GM12878 (cell line): ENCODE measurements at regions of chr14 and their contacts with region 1.

Region 1: GRCh38 chr14:55270832-55271565 is at the start of gene FBXO34:
- DNase-seq: peak; percentile 87
- ATAC-seq: peak; percentile 93
- H3K4me3 ChIP-seq: peak within 1 kb of the TSS; percentile 93
- H3K27ac ChIP-seq: peak within 1 kb of the TSS; percentile 88
- H3K4me1 ChIP-seq: peaks cover 26% of the 10 kb centered on the region
- H3K27me3 ChIP-seq: no peaks in the 10 kb centered on the region
- CTCF ChIP-seq: peak; percentile 99 to 100 (median 99); a peak in 5 of 6 replicates
- EP300 ChIP-seq: peak; percentile 59 to 82; a peak in 3 of 4 replicates
- POLR2A ChIP-seq: peak; percentile 86
- RAD21 ChIP-seq: peak; percentile 88
- polyA plus RNA-seq, gene FBXO34: 5.6 to 6.8 TPM

Region 2: GRCh38 chr14:55212634-55213033 is 58.4 kb before region 1 on chr14:
- CTCF ChIA-PET with region 1: interaction called, 16 read pairs
- POLR2A ChIA-PET with region 1: no interaction called
- RAD21 ChIA-PET with region 1: interaction called, 5 read pairs
- SMC1A ChIA-PET with region 1: interaction called, 5 read pairs
- in situ Hi-C with region 1: no loop called
- intact Hi-C with region 1: no loop called
- DNase-seq: no peak
- ATAC-seq: no peak
- H3K4me3 ChIP-seq: no peak overlapping the region
- H3K27ac ChIP-seq: no peak overlapping the region
- H3K4me1 ChIP-seq: no peaks in the 10 kb centered on the region
- H3K27me3 ChIP-seq: no peaks in the 10 kb centered on the region
- CTCF ChIP-seq: no peak
- EP300 ChIP-seq: no peak
- POLR2A ChIP-seq: no peak
- RAD21 ChIP-seq: no peak

Region 3: GRCh38 chr14:55285048-55285652 is 14.2 kb after region 1 on chr14:
- CTCF ChIA-PET with region 1: interaction called, 15 read pairs
- POLR2A ChIA-PET with region 1: interaction called, 7 read pairs
- RAD21 ChIA-PET with region 1: interaction called, 6 read pairs
- SMC1A ChIA-PET with region 1: interaction called, 8 read pairs
- in situ Hi-C with region 1: no loop called
- intact Hi-C with region 1: no loop called
- DNase-seq: no peak
- ATAC-seq: no peak
- H3K4me3 ChIP-seq: no peak overlapping the region
- H3K27ac ChIP-seq: no peak overlapping the region
- H3K4me1 ChIP-seq: 0 out of 2 replicates have a peak, but pooled peaks cover under 1% of the 10 kb centered on the region
- H3K27me3 ChIP-seq: no peaks in the 10 kb centered on the region
- CTCF ChIP-seq: no peak
- EP300 ChIP-seq: no peak
- POLR2A ChIP-seq: no peak
- RAD21 ChIP-seq: no peak

Region 4: GRCh38 chr14:55339770-55340169 is 68.8 kb after region 1 on chr14:
- CTCF ChIA-PET with region 1: interaction called, 13 read pairs
- POLR2A ChIA-PET with region 1: no interaction called
- RAD21 ChIA-PET with region 1: interaction called, 20 read pairs
- SMC1A ChIA-PET with region 1: interaction called, 6 read pairs
- in situ Hi-C with region 1: no loop called
- intact Hi-C with region 1: no loop called
- DNase-seq: no peak
- ATAC-seq: peak; percentile 90
- H3K4me3 ChIP-seq: no peak overlapping the region
- H3K27ac ChIP-seq: no peak overlapping the region
- H3K4me1 ChIP-seq: peaks cover 11% of the 10 kb centered on the region
- H3K27me3 ChIP-seq: no peaks in the 10 kb centered on the region
- CTCF ChIP-seq: no peak
- EP300 ChIP-seq: no peak
- POLR2A ChIP-seq: no peak
- RAD21 ChIP-seq: no peak

Region 5: GRCh38 chr14:55411426-55412389 is 140.7 kb after region 1 on chr14 and contains the start of gene ATG14:
- CTCF ChIA-PET with region 1: interaction called, 7 read pairs
- POLR2A ChIA-PET with region 1: no interaction called
- RAD21 ChIA-PET with region 1: interaction called, 10 read pairs
- SMC1A ChIA-PET with region 1: interaction called, 6 read pairs
- in situ Hi-C with region 1: no loop called
- intact Hi-C with region 1: loop called (anchors 5 kb)
- DNase-seq: peak; percentile 12
- ATAC-seq: peak; percentile 100
- H3K4me3 ChIP-seq: peak within 1 kb of the TSS; percentile 81
- H3K27ac ChIP-seq: peak within 1 kb of the TSS; percentile 53
- H3K4me1 ChIP-seq: peaks cover 3% of the 10 kb centered on the region
- H3K27me3 ChIP-seq: no peaks in the 10 kb centered on the region
- CTCF ChIP-seq: no peak
- EP300 ChIP-seq: peak in 1 of 2 experiments; percentile 11; a peak in 1 of 4 replicates
- POLR2A ChIP-seq: peak; percentile 89
- RAD21 ChIP-seq: no peak
- polyA plus RNA-seq, gene ATG14: 1.1 to 1.4 TPM